IMR-90 (cell line): ENCODE measurements at regions of chr2 and their contacts with region 1.

Region 1: DNA sequence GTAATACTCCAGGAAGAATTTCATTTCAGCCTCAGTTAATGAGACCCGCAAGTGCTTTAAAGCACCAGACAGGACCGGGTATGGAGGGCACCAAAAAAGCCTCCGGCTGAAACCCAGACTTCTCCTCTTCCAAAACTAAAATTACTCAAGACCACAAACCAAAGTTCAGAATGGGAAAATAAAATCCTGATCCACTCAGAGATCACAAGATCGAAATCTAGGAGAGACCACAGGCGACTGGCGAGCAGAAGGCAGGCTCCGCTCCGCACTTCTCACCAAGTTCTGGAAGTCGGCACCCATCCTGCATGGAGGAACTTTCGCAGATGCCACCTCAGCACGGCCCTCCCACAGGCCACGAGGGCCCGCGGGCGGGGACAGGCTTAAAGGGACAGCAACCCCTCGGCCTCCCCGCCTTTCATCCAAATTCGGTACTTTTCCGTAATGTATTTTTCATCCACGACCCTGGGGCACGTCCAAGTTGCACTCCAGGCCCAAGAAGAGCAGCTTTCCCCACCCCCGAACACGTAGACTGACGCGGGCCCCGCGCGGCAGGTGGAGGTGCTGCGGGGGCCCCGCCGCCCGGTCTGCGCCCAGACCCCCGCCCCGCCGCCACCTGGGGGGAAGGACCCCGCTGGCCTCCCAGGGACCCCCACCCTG is 43.7 kb downstream of the HDLBP start:
- DNase-seq: peak; percentile 79
- ATAC-seq: peak; percentile 70
- H3K4me3 ChIP-seq: peak overlapping the region; percentile 74
- H3K27ac ChIP-seq: peak overlapping the region; percentile 75
- H3K4me1 ChIP-seq: peaks cover 25% of the 10 kb centered on the region
- H3K27me3 ChIP-seq: no peaks in the 10 kb centered on the region
- CTCF ChIP-seq: no peak
- POLR2A ChIP-seq: peak; percentile 79
- RAD21 ChIP-seq: 0 out of 2 replicates have a peak, but pooled peaks have one; percentile 4

Region 2: DNA sequence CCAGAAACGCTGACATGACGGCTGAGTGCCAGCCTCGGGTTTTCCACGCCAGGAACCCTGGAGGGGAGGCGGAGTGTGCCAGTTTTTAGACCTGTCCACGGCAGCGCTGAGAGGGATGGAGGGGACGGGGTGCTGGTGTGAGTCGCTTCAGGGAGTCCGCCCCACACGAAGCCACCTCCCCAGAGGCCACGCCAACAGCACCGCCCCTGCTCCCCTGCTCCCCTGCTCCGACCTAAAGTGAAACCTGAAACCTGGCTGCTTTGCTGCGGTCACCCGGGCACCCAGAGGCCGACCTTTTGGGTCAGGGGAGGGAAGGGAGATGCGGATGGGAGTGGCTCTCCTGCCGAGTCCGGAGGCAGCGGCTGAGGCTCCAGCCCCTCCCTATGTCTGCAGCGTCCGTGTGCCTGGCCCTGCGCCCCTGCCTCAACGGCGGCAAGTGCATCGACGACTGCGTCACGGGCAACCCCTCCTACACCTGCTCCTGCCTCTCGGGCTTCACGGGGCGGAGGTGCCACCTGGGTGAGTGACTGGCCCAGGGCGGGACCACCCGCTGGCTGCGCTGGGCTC is 235.3 kb before region 1 on chr2:
- CTCF ChIA-PET with region 1: no interaction called
- POLR2A ChIA-PET with region 1: no interaction called
- dilution Hi-C with region 1: no loop called
- in situ Hi-C with region 1: no loop called
- intact Hi-C with region 1: no loop called
- DNase-seq: no peak
- ATAC-seq: no peak
- H3K4me3 ChIP-seq: no peak overlapping the region
- H3K27ac ChIP-seq: no peak overlapping the region
- H3K4me1 ChIP-seq: no peaks in the 10 kb centered on the region
- H3K27me3 ChIP-seq: no peaks in the 10 kb centered on the region
- CTCF ChIP-seq: no peak
- POLR2A ChIP-seq: no peak
- RAD21 ChIP-seq: no peak

Region 3: DNA sequence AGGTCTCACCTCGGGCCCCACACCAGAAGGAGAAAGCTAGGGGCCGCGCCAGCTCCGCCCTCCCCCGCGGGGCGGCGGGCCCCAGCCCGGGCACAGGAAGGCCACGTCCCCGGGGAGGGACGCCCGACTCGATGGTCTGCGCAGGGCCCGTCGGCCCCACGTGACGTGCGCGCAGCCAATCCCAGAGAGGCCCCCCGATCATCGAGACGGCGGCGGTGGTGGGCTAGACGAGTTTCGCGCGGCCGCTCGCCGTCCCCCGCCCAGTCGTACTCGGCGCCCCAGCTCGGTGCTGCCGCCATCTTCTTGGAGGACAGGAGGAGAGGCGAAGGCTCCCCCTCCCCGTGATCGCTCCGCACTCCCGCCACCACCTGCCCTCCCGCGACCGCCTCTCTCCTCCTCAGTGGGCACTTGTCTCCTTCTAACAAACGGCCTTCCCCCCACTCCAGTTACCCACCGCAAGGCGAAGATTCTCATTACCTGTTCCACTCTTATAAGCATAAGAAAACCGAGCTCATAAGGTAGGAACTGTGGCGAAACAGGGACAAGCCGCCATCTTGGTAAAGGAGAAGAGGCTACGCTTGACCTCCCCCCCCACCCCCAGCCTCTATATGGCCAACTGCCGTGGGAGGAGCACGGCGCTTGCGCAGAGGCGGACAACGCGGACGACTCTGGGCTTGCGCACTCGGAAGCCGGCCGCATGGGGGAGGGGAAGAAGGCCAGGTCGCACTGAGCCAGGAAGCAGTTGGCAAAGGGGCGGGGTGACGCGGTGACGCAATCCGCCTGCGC is 43.5 kb after region 1 on chr2 and contains the start of gene HDLBP:
- CTCF ChIA-PET with region 1: no interaction called
- POLR2A ChIA-PET with region 1: no interaction called
- dilution Hi-C with region 1: no loop called
- in situ Hi-C with region 1: no loop called
- intact Hi-C with region 1: loop called (anchors 2 kb)
- DNase-seq: peak; percentile 99
- ATAC-seq: peak; percentile 85
- H3K4me3 ChIP-seq: peak within 1 kb of the TSS; percentile 98
- H3K27ac ChIP-seq: peak within 1 kb of the TSS; percentile 98
- H3K4me1 ChIP-seq: peaks cover 2% of the 10 kb centered on the region
- H3K27me3 ChIP-seq: no peaks in the 10 kb centered on the region
- CTCF ChIP-seq: peak; percentile 38
- POLR2A ChIP-seq: peak; percentile 74
- RAD21 ChIP-seq: no peak
- total RNA-seq, gene HDLBP: 1,093 and 1,165 TPM in 2 replicates

Region 4: GRCh38 chr2:241324775-241325174 is 53.0 kb after region 1 on chr2:
- CTCF ChIA-PET with region 1: no interaction called
- POLR2A ChIA-PET with region 1: interaction called, 10 read pairs
- dilution Hi-C with region 1: no loop called
- in situ Hi-C with region 1: no loop called
- intact Hi-C with region 1: no loop called
- DNase-seq: no peak
- ATAC-seq: no peak
- H3K4me3 ChIP-seq: no peak overlapping the region
- H3K27ac ChIP-seq: no peak overlapping the region
- H3K4me1 ChIP-seq: peaks cover 4% of the 10 kb centered on the region
- H3K27me3 ChIP-seq: no peaks in the 10 kb centered on the region
- CTCF ChIP-seq: no peak
- POLR2A ChIP-seq: no peak
- RAD21 ChIP-seq: no peak